GM12878 (cell line): ENCODE measurements at regions of chr1 and their contacts with region 1.

Region 1: GRCh38 chr1:33127001-33127791 is 46.2 kb downstream of the AZIN2 start:
- DNase-seq: peak; percentile 99
- ATAC-seq: peak; percentile 95
- H3K4me3 ChIP-seq: peak overlapping the region; percentile 97
- H3K27ac ChIP-seq: peak overlapping the region; percentile 97
- H3K4me1 ChIP-seq: peaks cover 18% of the 10 kb centered on the region
- H3K27me3 ChIP-seq: no peaks in the 10 kb centered on the region
- CTCF ChIP-seq: peak; percentile 92 to 99 (median 99); a peak in 5 of 6 replicates
- EP300 ChIP-seq: no peak
- POLR2A ChIP-seq: peak; percentile 95
- RAD21 ChIP-seq: peak; percentile 31

Region 2: DNA sequence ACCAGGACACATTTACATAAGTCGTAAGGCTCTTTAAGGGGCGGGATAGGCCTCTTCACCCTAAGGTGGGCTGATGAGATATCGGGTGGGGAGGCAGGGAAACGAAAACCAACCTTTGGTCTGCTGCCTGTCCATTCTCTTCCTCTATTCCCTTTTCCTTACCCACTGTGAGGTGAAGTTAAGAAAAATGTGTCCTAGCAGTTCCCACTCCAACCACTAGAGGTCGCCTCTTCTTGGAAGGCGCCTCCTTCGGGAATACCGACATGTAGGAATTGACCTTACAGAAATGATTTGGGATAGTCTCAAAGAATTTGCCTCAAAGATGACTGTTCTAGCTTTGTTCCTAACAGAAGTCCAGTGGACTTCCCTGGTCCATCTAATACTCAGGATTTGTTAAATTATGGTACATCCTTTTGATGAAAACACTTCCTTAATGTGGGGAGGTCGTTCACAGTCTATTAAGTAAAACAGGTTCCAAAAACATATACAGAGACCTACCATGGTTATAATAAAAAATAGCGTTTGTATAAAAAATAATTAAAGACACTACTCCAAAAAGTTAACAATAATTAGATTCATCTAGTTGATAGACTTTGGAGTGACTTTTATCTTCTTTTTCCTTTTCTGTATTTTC is 32.1 kb before region 1 on chr1:
- CTCF ChIA-PET with region 1: interaction called, 24 read pairs
- POLR2A ChIA-PET with region 1: no interaction called
- RAD21 ChIA-PET with region 1: interaction called, 3 read pairs
- SMC1A ChIA-PET with region 1: interaction called, 4 read pairs
- in situ Hi-C with region 1: no loop called
- intact Hi-C with region 1: loop called (anchors 2 kb)
- DNase-seq: no peak
- ATAC-seq: no peak
- H3K4me3 ChIP-seq: no peak overlapping the region
- H3K27ac ChIP-seq: no peak overlapping the region
- H3K4me1 ChIP-seq: peaks cover 6% of the 10 kb centered on the region; the same call in 1 of the 2 replicates
- H3K27me3 ChIP-seq: no peaks in the 10 kb centered on the region
- CTCF ChIP-seq: peak; percentile 83 to 99 (median 96)
- EP300 ChIP-seq: no peak
- POLR2A ChIP-seq: no peak
- RAD21 ChIP-seq: peak; percentile 49

Region 3: GRCh38 chr1:33111970-33112369 is 15.2 kb before region 1 on chr1:
- CTCF ChIA-PET with region 1: interaction called, 11 read pairs
- POLR2A ChIA-PET with region 1: interaction called, 5 read pairs
- RAD21 ChIA-PET with region 1: no interaction called
- SMC1A ChIA-PET with region 1: interaction called, 11 read pairs
- in situ Hi-C with region 1: no loop called
- intact Hi-C with region 1: no loop called
- DNase-seq: no peak
- ATAC-seq: peak; percentile 79
- H3K4me3 ChIP-seq: no peak overlapping the region
- H3K27ac ChIP-seq: no peak overlapping the region
- H3K4me1 ChIP-seq: no peaks in the 10 kb centered on the region
- H3K27me3 ChIP-seq: no peaks in the 10 kb centered on the region
- CTCF ChIP-seq: peak; percentile 37 to 64 (median 44); a peak in 4 of 6 replicates
- EP300 ChIP-seq: no peak
- POLR2A ChIP-seq: no peak
- RAD21 ChIP-seq: peak; percentile 59

Region 4: GRCh38 chr1:33137800-33138199 is 10.6 kb after region 1 on chr1:
- CTCF ChIA-PET with region 1: interaction called, 51 read pairs
- POLR2A ChIA-PET with region 1: interaction called, 4 read pairs
- RAD21 ChIA-PET with region 1: interaction called, 5 read pairs
- SMC1A ChIA-PET with region 1: interaction called, 9 read pairs
- in situ Hi-C with region 1: no loop called
- intact Hi-C with region 1: no loop called
- DNase-seq: no peak
- ATAC-seq: peak; percentile 74
- H3K4me3 ChIP-seq: no peak overlapping the region
- H3K27ac ChIP-seq: no peak overlapping the region
- H3K4me1 ChIP-seq: no peaks in the 10 kb centered on the region
- H3K27me3 ChIP-seq: no peaks in the 10 kb centered on the region
- CTCF ChIP-seq: peak; percentile 48 to 68 (median 64)
- EP300 ChIP-seq: no peak
- POLR2A ChIP-seq: no peak
- RAD21 ChIP-seq: peak; percentile 54

Region 5: GRCh38 chr1:33181921-33182341 is 54.7 kb after region 1 on chr1 and contains the start of gene TRIM62:
- CTCF ChIA-PET with region 1: interaction called, 18 read pairs
- POLR2A ChIA-PET with region 1: interaction called, 8 read pairs
- RAD21 ChIA-PET with region 1: interaction called, 3 read pairs
- SMC1A ChIA-PET with region 1: interaction called, 4 read pairs
- in situ Hi-C with region 1: no loop called
- intact Hi-C with region 1: loop called (anchors 2 kb)
- DNase-seq: no peak
- ATAC-seq: peak; percentile 84
- H3K4me3 ChIP-seq: peak within 1 kb of the TSS; percentile 84
- H3K27ac ChIP-seq: no peak within 1 kb of the TSS
- H3K4me1 ChIP-seq: peaks cover 4% of the 10 kb centered on the region
- H3K27me3 ChIP-seq: peaks cover 0 to 8% of the 10 kb centered on the region in 2 experiments; a peak in 3 of 4 replicates
- CTCF ChIP-seq: no peak
- EP300 ChIP-seq: no peak
- POLR2A ChIP-seq: peak; percentile 81
- RAD21 ChIP-seq: no peak
- polyA plus RNA-seq, gene TRIM62: 0.52 to 0.55 TPM

Region 6: DNA sequence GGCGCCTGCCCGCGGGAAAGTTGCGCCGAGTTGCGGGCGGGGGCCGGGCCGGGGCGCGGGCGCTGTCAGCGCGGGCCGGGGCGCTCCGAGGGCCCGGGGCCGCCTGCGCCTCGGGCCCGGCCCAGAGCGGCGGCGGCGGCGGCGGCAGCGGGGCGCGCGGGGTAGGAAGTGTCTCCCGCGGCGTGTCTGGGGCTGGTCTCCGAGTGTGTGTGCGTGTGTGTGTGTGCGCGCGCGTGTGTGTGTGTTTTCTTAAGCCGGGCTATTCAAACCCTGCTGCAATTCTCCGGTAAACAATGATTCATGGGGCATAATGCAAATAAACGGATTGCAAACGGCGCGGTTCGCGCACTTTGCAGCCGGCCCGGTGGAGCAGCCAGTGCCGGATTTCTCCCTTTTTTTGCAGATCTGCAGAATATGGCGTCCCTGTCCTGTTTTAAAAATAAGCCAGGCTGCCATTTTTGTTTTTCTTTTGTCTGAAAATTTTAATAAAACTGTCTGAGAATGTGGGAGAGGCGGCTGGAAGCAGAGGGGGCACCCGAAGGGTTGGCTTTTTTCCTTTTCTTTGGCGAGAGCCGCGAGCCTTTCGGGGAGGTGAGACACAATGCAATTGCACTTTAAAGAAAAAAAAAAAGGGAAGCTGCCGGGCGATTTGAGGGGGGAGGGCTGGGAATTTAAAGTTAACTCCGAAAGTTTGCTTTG is 129.7 kb after region 1 on chr1:
- CTCF ChIA-PET with region 1: interaction called, 4 read pairs
- POLR2A ChIA-PET with region 1: no interaction called
- RAD21 ChIA-PET with region 1: no interaction called
- SMC1A ChIA-PET with region 1: interaction called, 3 read pairs
- in situ Hi-C with region 1: no loop called
- intact Hi-C with region 1: loop called (anchors 5 kb)
- DNase-seq: no peak
- ATAC-seq: peak; percentile 41
- H3K4me3 ChIP-seq: peak overlapping the region; percentile 94
- H3K27ac ChIP-seq: peak overlapping the region; percentile 90
- H3K4me1 ChIP-seq: peaks cover 29% of the 10 kb centered on the region
- H3K27me3 ChIP-seq: no peaks in the 10 kb centered on the region
- CTCF ChIP-seq: no peak
- EP300 ChIP-seq: no peak
- POLR2A ChIP-seq: no peak
- RAD21 ChIP-seq: no peak

Region 7: DNA sequence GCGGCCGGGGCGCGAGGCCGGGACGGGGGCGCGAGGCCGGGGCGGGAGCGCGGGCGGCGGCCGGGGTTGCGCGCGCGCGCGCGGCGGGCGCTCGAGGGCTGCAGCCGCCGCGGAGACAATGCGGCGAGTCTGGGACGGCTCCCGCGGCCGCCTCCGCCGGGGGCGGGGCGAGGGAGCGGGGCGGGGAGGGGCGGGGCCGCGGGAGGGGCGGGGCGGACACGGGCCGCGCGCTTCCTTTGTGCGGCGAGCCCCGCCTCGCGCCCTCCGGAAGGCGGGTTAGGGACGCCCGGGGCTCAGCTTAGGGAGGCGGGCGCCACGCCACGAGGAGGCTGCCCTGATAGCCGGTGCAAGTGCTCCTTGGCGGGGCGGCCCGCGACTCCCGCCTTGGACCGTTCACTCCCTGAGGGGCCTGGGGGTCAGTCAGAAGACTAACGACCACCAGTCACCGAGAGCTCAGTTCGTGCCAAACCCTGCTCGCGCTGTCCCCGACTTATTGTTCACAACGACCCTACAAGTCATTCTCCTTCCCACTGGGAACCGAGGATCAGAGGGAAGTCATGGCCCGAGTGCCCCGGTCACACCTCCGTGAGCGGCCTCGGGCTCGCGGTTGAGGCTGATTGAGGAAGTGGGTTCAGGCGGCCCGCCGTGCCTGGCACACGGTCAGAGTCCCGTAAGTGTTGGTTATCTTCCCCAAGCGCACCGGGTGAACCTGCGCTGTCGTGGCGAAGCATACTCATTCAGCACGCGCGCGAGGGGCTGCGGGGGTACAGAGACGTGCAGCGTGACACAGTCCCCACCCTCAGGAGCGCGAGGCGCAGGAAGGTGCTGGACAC is 222.8 kb after region 1 on chr1:
- CTCF ChIA-PET with region 1: interaction called, 3 read pairs
- POLR2A ChIA-PET with region 1: interaction called, 11 read pairs
- RAD21 ChIA-PET with region 1: interaction called, 3 read pairs
- SMC1A ChIA-PET with region 1: interaction called, 3 read pairs
- in situ Hi-C with region 1: no loop called
- intact Hi-C with region 1: loop called (anchors 10 kb)
- DNase-seq: no peak
- ATAC-seq: peak; percentile 87
- H3K4me3 ChIP-seq: peak overlapping the region; percentile 75
- H3K27ac ChIP-seq: peak overlapping the region; percentile 92
- H3K4me1 ChIP-seq: peaks cover 18% of the 10 kb centered on the region
- H3K27me3 ChIP-seq: no peaks in the 10 kb centered on the region
- CTCF ChIP-seq: no peak
- EP300 ChIP-seq: no peak
- POLR2A ChIP-seq: peak; percentile 93
- RAD21 ChIP-seq: no peak